ENCODE measurements at regions of chr6 and their contacts with region 1.

Region 1: DNA sequence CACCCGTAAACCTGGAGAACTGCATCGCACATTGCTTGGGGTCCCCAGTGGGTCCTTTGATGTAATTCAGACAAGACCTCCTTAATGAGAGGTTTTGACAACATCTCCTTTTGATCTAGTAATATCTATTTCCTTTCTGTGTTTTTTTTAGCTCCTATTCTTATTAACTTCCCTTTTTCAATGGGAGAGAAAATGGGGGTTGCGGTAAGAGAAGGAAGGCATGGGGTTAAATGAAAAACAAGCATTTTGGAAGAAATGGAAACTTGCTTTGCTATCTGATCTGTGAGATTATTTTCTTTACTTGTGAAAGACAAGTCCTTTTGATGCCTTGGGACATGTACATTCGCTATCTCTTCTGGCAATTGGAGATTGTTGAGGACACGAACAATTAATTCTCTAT is 418.6 kb upstream of the MAN1A1 start:
- DNase-seq: no peak
- H3K4me3 ChIP-seq: no peak overlapping the region
- H3K27ac ChIP-seq: no peak overlapping the region
- H3K4me1 ChIP-seq: no peaks in the 10 kb centered on the region
- H3K27me3 ChIP-seq: no peaks in the 10 kb centered on the region
- CTCF ChIP-seq: no peak

Region 2: DNA sequence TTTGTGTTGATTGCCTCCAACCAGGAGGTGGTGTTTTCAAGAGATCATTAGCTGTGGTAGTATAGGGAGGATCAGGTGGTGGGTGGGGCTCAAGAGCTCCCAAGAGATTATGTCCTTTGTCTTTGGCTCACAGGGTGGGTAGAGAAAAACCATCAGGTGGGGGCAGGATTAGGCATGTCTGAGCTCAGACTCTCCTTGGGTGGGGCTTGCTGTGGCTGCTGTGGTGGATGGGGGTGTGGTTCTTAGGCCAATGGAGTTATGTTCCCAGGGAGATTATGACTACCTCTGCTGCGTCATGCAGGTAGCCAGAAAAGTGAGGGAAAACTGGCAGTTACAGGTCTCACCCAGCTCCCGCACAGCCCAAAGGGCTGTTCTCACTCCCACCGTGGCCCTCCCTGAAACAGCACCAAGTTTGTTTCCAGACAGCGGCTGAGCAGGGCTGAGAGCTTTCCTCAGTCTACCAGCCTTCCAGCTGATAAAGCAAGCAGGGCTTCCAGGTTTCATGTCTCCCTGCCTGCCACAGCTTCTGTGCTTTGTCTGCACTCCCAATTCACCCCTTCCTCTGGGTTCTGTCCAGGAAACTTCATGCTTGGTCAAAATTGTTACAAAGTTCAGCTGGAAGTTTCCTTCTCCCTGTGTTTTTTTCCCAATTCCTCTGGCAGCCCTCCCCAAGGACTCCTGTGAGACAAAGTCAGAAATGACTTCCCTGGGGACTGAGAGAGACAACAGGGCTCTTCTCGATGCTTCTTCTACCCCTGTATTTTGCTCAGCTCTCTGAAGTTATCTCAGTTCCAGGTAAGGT is 62.5 kb after region 1 on chr6:
- CTCF ChIA-PET with region 1: no interaction called
- dilution Hi-C with region 1: no loop called
- in situ Hi-C with region 1: no loop called
- intact Hi-C with region 1: no loop called
- DNase-seq: peak; percentile 97
- H3K4me3 ChIP-seq: no peak overlapping the region
- H3K27ac ChIP-seq: peak overlapping the region; percentile 91
- H3K4me1 ChIP-seq: peaks cover 40% of the 10 kb centered on the region
- H3K27me3 ChIP-seq: no peaks in the 10 kb centered on the region
- CTCF ChIP-seq: no peak

Region 3: GRCh38 chr6:119966486-119966885 is 198.3 kb after region 1 on chr6:
- CTCF ChIA-PET with region 1: no interaction called
- dilution Hi-C with region 1: no loop called
- in situ Hi-C with region 1: loop called in 1 of 2 experiments (anchors 25 kb)
- intact Hi-C with region 1: no loop called
- DNase-seq: no peak
- H3K4me3 ChIP-seq: no peak overlapping the region
- H3K27ac ChIP-seq: no peak overlapping the region
- H3K4me1 ChIP-seq: no peaks in the 10 kb centered on the region
- H3K27me3 ChIP-seq: no peaks in the 10 kb centered on the region
- CTCF ChIP-seq: peak; percentile 10 to 25

Measured in mammary epithelial cell (primary cell).